ENCODE measurements at regions of chr7 and their contacts with region 1.

Region 1: GRCh38 chr7:37052705-37053104 is 328.4 kb upstream of the AOAH start:
- DNase-seq: peak; percentile 44
- ATAC-seq: peak; percentile 70
- H3K4me3 ChIP-seq: no peak overlapping the region
- H3K27ac ChIP-seq: no peak overlapping the region
- H3K4me1 ChIP-seq: peaks cover 31% of the 10 kb centered on the region
- H3K27me3 ChIP-seq: no peaks in the 10 kb centered on the region; a peak in 1 of 5 replicates
- CTCF ChIP-seq: no peak
- EP300 ChIP-seq: no peak
- POLR2A ChIP-seq: no peak
- RAD21 ChIP-seq: no peak

Region 2: DNA sequence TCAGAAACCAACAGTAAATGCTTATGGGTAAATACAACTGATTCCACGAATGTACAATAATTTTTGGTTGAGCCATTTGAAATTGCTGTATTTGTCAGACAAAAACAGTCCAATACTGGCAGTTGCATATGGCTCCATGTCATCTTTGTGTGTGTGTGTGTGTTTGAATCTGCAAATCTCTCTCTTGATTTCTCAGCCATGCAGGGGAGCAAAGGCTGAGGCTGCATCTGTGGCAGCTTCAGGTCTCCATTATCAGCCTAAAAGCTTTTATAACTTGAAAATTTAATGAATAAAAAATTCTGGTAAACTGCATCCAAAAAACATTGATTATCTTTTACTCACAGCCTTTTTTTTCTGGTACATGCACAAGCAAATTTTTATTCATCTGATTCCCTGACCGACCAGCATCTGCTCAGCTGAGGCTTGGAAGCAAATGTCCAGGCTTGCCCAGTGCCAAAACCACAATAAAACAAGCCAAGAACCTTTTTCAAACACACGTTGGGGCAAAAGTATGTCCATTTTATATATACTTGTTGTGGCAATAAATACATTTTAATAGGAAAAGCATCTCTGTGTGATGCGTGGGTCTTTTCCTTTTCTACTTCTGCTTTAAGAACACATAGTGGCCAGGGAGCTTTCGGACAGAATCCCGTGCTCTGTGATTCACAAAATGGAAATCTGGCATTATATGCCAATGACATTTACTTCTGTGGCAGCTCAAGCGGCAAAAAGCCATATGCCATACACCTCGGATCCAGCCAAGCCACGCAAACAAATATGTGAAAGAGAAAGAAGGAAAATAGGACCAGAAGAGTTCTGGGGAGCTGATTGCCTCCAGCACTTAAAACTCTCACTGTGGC is 52.8 kb before region 1 on chr7:
- CTCF ChIA-PET with region 1: no interaction called
- POLR2A ChIA-PET with region 1: no interaction called
- in situ Hi-C with region 1: no loop called
- intact Hi-C with region 1: no loop called
- DNase-seq: no peak
- ATAC-seq: no peak
- H3K4me3 ChIP-seq: no peak overlapping the region
- H3K27ac ChIP-seq: no peak overlapping the region
- H3K4me1 ChIP-seq: peaks cover 32% of the 10 kb centered on the region
- H3K27me3 ChIP-seq: no peaks in the 10 kb centered on the region
- CTCF ChIP-seq: no peak
- EP300 ChIP-seq: no peak
- POLR2A ChIP-seq: no peak
- RAD21 ChIP-seq: no peak

Region 3: DNA sequence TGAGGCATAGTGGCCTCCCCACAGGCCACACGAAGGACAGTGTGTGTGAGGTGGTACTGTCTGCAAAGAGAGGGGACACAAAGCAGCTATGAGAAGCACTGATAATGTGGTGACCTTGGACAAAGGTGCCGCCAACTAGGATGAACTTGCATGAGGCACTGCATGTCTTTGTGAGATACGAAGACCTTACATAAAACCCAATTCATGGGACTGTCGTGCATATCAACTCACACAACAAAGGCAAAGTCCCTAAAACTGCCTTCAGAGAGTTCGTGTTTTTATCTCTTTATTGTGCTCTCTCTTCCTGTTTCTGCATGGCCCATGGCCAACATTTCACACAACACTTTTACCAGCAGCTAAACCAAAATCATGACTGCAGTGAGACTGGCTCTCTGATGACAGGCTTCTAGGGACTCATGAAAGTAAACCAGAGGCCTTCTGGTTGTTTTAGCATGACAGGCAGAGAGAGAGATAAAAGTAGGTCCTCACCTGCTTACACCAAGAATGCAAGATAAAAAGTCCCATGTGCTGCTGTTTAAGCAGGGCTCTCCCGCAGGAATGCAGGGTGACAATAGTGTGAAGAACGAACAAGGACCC is 48.1 kb after region 1 on chr7:
- CTCF ChIA-PET with region 1: no interaction called
- POLR2A ChIA-PET with region 1: no interaction called
- in situ Hi-C with region 1: no loop called
- intact Hi-C with region 1: loop called (anchors 5 kb)
- DNase-seq: peak; percentile 80
- ATAC-seq: peak; percentile 71
- H3K4me3 ChIP-seq: 0 out of 6 replicates have a peak overlapping the region, but pooled peaks of 1 of the 3 experiments have one; percentile 6
- H3K27ac ChIP-seq: peak overlapping the region; percentile 10
- H3K4me1 ChIP-seq: peaks cover 35% of the 10 kb centered on the region
- H3K27me3 ChIP-seq: 0 out of 5 replicates have a peak, but pooled peaks cover 0 to 1% of the 10 kb centered on the region in 2 experiments
- CTCF ChIP-seq: no peak
- EP300 ChIP-seq: peak in 1 of 2 experiments; percentile 30; a peak in 1 of 4 replicates
- POLR2A ChIP-seq: no peak
- RAD21 ChIP-seq: no peak

Measured in HepG2 (cell line).